ENCODE measurements at regions of chr19 and their contacts with region 1.

Region 1: GRCh38 chr19:38402967-38403861 is at the start of gene FAM98C:
- DNase-seq: peak; percentile 97
- H3K4me3 Mint-ChIP-seq: peak within 1 kb of the TSS; percentile 88
- H3K27ac Mint-ChIP-seq: peak within 1 kb of the TSS; percentile 96
- H3K4me1 Mint-ChIP-seq: peaks cover 27% of the 10 kb centered on the region
- H3K27me3 Mint-ChIP-seq: no peaks in the 10 kb centered on the region
- total RNA-seq, gene FAM98C: 27.5 to 37.2 TPM

Region 2: GRCh38 chr19:38374429-38375176 is 28.6 kb before region 1 on chr19 and contains the start of gene PSMD8:
- CTCF ChIA-PET with region 1: interaction called, 13 read pairs
- POLR2A ChIA-PET with region 1: no interaction called
- DNase-seq: peak; percentile 99
- H3K4me3 Mint-ChIP-seq: peak within 1 kb of the TSS; percentile 98
- H3K27ac Mint-ChIP-seq: peak within 1 kb of the TSS; percentile 97
- H3K4me1 Mint-ChIP-seq: peaks cover 28% of the 10 kb centered on the region
- H3K27me3 Mint-ChIP-seq: no peaks in the 10 kb centered on the region
- total RNA-seq, gene PSMD8: 178 to 186 TPM

Region 3: DNA sequence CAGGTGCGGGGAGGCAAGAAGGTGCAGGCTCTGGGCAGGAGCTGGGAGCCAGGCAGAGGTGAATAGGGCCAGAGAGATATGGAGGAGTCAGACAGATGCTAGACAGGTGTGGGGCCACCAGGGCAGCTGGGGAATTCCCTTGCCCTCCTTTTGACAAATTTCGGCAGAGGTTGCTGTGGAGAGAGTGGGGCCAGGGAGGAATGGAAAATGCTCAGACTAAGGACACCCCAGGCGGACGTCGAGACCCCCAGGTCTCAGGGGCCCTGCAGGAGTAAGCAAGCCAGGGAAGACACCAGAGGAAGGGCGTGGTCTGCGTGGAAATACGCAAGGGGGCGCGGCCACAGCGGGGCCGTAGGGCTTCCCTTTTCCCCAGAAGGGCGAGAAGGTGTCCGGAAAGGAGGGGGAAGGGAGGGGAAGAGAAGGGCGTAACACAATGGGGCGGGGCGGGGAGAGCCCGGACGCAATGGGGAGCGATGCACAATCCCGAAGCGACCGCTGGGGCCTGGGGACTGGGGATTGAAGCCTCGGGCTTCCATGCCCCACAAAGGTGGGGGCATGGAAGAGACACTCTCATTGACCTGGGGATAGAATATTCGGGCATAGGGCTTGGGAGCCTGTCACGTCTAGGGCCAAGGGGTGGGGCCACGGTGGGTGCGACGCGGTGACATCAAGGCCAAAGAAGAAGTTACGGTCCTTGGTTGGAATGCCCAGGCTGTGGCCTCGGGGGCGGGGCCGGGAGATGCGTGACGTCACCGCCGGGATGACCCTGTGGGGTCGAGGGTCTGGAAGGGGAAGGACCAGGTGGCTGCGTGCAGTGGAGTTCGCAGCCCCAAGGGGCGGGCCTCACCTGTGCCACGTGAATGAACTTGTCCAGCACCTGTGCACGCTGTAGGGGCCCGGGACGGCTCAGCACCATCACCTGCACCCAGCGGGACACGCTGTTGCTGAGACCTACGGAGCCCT is 14.6 kb after region 1 on chr19:
- CTCF ChIA-PET with region 1: interaction called, 66 read pairs
- POLR2A ChIA-PET with region 1: no interaction called
- DNase-seq: peak; percentile 65
- H3K4me3 Mint-ChIP-seq: peak overlapping the region; percentile 71
- H3K27ac Mint-ChIP-seq: peak overlapping the region; percentile 61
- H3K4me1 Mint-ChIP-seq: peaks cover 26% of the 10 kb centered on the region
- H3K27me3 Mint-ChIP-seq: no peaks in the 10 kb centered on the region

Region 4: DNA sequence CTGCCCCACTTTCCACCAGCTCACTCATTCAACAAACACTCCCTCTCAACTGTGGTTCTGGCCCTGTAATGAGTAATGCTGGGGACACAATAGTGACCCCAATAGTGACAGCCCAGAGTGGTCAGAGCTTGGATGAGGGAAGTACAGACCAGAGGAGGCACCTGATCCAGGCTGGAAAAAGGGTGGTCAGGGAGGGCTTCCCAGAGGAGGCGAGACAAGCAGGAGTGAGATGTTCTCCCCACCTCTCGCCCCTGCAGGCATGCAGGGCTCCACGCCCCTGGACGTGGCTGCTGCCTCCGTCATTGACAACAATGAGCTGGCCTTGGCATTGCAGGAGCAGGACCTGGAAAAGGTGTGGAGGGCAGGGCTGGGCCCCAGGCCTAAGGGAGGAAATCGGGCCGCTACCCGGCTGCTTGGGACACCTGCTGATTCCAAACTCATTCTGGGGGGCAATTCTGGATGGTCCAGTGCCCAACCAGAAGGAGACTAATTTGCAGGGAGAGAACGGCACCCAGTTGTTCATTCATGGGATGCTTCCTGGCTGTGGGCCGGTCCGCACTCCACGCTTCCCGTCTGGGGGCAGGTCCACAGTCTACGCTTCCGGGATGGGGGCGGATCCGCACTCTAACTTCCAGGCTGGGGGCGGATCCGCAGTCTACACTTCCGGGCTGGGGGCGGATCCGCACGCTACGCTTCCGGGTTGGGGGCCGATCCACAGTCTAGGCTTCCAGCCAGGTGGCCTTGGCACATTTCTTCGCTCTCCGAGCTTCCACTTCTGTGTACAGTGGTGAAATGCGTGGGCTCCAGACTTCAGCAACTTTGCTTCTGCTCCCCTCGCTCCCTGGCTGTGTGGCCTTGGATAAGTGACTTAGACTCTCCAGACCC is 93.6 kb after region 1 on chr19:
- CTCF ChIA-PET with region 1: interaction called, 10 read pairs
- POLR2A ChIA-PET with region 1: no interaction called
- DNase-seq: no peak
- H3K4me3 Mint-ChIP-seq: no peak overlapping the region
- H3K27ac Mint-ChIP-seq: no peak overlapping the region
- H3K4me1 Mint-ChIP-seq: peaks cover 3% of the 10 kb centered on the region
- H3K27me3 Mint-ChIP-seq: no peaks in the 10 kb centered on the region

Region 5: DNA sequence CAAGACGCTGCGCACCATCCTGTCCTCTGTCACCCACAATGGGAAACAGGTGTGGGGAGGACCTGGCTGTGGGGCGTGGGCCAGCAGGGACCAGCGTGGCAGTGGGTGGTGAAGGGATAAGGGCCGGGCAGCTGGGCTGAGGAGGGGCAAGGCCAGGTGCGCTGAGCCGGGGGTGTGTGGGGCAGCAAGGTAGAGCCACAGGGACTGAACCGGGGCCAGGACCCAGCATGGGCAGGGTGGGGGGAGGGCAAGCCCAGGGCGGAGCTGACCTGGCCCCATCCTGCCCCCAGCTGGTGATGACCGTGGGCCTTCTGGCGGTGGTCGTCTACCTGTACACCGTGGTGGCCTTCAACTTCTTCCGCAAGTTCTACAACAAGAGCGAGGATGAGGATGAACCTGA is 176.9 kb after region 1 on chr19:
- CTCF ChIA-PET with region 1: no interaction called
- POLR2A ChIA-PET with region 1: no interaction called
- DNase-seq: no peak
- H3K4me3 Mint-ChIP-seq: no peak overlapping the region
- H3K27ac Mint-ChIP-seq: no peak overlapping the region
- H3K4me1 Mint-ChIP-seq: peaks cover 22% of the 10 kb centered on the region
- H3K27me3 Mint-ChIP-seq: no peaks in the 10 kb centered on the region

Region 6: GRCh38 chr19:38634757-38635482 is 231.7 kb after region 1 on chr19:
- CTCF ChIA-PET with region 1: interaction called, 10 read pairs
- POLR2A ChIA-PET with region 1: no interaction called
- DNase-seq: peak; percentile 79
- H3K4me3 Mint-ChIP-seq: no peak overlapping the region
- H3K27ac Mint-ChIP-seq: peak overlapping the region; percentile 78
- H3K4me1 Mint-ChIP-seq: peaks cover 44% of the 10 kb centered on the region
- H3K27me3 Mint-ChIP-seq: no peaks in the 10 kb centered on the region

Region 7: DNA sequence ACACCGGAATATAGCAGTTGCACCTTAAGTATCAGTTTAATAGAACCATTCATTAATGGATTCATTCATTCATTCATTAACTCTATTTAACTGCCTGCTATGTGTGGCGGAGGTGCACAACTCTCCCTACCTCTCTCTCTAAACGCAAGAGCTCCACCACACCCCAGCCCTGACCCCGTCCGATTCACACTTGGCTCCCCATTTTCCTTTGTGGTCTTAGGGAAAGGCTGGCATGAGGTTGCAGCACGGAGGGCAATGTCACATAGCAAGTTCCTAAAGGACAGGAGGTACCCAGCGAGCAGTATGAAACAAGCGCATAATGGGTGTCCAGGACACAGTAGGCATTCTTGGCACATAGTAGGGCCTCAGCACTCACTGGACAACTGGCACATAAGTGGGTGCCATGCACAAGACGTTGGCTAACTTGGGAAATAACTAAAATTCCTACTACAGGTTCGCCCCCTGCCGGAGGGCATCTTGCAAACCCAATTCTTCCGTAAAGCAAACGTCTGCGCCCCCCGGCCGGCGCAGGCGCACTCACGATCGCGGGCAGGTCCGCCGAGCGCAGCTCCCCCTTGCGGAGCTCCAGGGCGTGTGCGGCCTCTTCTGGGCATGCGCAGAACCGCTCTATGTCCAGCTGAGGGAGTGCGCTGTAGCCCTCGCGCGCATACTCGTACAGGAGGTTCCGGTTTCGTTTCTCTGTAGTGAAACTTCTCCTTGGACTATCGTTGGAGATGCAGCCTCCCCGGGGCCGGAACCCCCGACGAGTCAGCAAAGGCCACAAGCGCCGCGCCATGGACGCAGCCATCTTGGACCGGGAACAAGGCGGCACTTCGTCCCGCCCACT is 526.9 kb after region 1 on chr19 and contains the start of gene SARS2:
- CTCF ChIA-PET with region 1: interaction called, 20 read pairs
- POLR2A ChIA-PET with region 1: no interaction called
- DNase-seq: peak; percentile 93
- H3K4me3 Mint-ChIP-seq: peak within 1 kb of the TSS; percentile 85
- H3K27ac Mint-ChIP-seq: peak within 1 kb of the TSS; percentile 93
- H3K4me1 Mint-ChIP-seq: peaks cover 34% of the 10 kb centered on the region
- H3K27me3 Mint-ChIP-seq: no peaks in the 10 kb centered on the region
- total RNA-seq, gene SARS2: 33.4 to 37.9 TPM

Measured in activated CD4-positive, alpha-beta T cell treated with anti-CD3 and anti-CD28 coated beads, Interleukin-2, amount 10 ng/mL, durations not matched to agents 7 days and 5 days (primary cell).